BJ (cell line): ENCODE measurements at regions of chr10 and their contacts with region 1.

Region 1: DNA sequence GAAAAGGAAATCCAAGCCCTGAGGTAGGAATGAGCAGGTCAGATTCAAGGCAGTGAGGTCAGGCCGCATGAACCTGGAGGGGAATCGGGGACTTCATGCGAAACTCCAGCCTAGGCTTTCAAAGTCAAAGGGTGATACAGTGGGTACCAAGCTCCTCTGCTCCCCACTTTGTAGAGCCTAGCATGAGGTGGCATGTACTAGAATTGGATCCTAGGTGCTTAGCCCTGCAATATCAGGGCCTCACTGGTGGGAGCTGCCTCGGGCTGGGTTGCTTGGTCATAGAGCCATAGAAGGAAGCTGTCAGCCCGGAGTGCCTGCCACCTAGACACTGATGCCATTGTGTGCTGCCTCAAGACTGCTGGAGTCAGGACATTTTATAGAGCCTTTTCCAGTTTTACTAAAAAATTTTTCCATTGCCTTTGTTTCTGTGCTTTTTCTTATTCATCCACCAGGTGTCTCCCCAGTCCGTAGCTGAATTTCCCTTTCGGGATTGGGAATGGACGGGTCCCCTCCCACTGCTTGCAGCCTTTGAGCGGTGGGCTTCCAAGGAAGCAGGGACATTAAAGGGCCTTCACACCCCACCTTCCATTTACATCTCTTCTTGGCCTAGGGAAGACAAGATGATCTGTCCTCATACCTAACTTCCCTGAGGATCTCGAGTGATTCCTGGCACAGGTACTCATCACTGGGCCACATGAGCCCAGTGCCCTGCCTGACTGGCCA is 5.5 kb upstream of the LZTS2 start:
- DNase-seq: no peak
- H3K4me3 ChIP-seq: no peak overlapping the region
- H3K27me3 ChIP-seq: no peaks in the 10 kb centered on the region
- CTCF ChIP-seq: peak; percentile 72

Region 2: GRCh38 chr10:100969187-100970075 is 24.7 kb before region 1 on chr10 and contains the start of gene SEMA4G:
- CTCF ChIA-PET with region 1: interaction called, 10 read pairs
- POLR2A ChIA-PET with region 1: no interaction called
- DNase-seq: no peak
- H3K4me3 ChIP-seq: peak within 1 kb of the TSS; percentile 67
- H3K27me3 ChIP-seq: no peaks in the 10 kb centered on the region
- CTCF ChIP-seq: peak; percentile 92
- polyA plus RNA-seq, gene SEMA4G: 4.2 and 4.3 TPM in 2 replicates